Activated CD8-positive, alpha-beta T cell treated with anti-CD3 and anti-CD28 coated beads, Interleukin-2, amount 10 ng/mL, durations not matched to agents 7 days and 5 days (primary cell): ENCODE measurements at regions of chr20 and their contacts with region 1.

Region 1: GRCh38 chr20:34768096-34768495 is 57.4 kb downstream of the NCOA6 start:
- DNase-seq: no peak
- ATAC-seq: no peak
- H3K4me3 Mint-ChIP-seq: no peak overlapping the region
- H3K27ac Mint-ChIP-seq: no peak overlapping the region
- H3K4me1 Mint-ChIP-seq: no peaks in the 10 kb centered on the region
- H3K27me3 Mint-ChIP-seq: no peaks in the 10 kb centered on the region

Region 2: DNA sequence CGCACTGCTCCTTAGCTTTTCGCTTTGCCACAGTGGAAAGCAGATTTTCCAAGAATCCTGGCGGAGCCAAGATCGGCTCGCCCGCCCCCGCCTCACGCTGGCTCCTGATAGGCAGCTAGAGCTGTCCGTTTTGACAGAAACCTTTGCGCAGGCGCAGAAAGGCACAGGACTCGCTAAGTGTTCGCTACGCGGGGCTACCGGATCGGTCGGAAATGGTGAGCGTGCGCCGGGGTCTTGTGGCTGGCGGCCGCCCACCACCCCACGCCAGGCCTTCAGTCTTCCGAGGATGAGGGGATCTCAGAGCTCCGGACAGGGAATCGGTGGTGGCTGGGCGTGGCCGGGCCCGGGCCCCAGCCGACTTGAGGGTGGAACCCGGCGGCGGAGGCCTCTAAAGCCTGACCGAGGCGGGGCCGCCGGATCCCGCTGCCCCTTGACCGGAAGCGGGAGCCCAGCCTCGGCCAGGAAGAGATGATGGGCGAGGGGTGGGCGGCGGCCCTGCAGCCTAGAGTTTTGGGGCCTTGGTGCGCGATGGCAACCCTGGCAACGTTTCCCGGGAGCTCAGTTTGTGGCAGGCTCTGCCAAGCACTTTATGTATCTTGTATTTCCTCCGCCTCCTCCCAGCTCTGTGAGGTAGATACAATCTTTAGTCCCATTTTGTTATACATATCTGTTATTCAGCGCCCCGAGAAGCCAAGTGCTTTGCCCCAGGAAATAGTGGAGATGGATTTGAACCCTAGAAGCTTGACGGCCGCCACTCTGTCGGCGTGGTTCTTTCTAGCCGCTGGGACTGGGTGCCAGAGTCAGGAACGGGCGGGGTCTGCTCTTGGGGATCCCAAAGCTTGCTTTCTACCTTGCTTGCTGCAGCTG is 251.6 kb before region 1 on chr20 and contains the start of gene DYNLRB1:
- CTCF ChIA-PET with region 1: interaction called, 12 read pairs
- POLR2A ChIA-PET with region 1: no interaction called
- DNase-seq: peak; percentile 97
- ATAC-seq: peak; percentile 88
- H3K4me3 Mint-ChIP-seq: peak within 1 kb of the TSS; percentile 98
- H3K27ac Mint-ChIP-seq: peak within 1 kb of the TSS; percentile 98
- H3K4me1 Mint-ChIP-seq: peaks cover 31% of the 10 kb centered on the region
- H3K27me3 Mint-ChIP-seq: no peaks in the 10 kb centered on the region
- total RNA-seq, gene DYNLRB1: 91.9 to 103 TPM

Region 3: DNA sequence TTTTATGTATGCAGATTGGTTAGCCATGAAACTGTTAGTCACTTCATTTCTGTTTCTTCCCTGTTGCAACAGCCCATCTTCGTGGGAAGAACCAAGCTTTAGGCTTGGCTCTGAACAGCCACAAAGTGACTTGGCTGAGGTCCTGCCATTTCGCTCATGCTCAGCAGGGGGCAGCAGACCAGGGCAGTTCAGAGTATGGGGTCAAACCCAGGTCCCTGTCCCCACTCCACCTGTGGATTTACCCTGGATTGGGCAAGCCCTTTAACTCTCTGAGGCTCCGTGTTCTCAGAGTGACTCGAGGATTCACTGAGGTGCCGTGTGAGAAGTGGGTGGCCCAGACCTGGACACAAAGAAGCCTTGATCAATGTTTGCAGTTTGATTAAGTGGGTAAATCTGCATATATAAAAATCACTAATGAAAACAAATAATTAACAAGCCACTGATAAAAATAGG is 229.4 kb before region 1 on chr20:
- CTCF ChIA-PET with region 1: interaction called, 12 read pairs
- POLR2A ChIA-PET with region 1: no interaction called
- DNase-seq: peak; percentile 66
- ATAC-seq: peak; percentile 66
- H3K4me3 Mint-ChIP-seq: no peak overlapping the region
- H3K27ac Mint-ChIP-seq: no peak overlapping the region
- H3K4me1 Mint-ChIP-seq: peaks cover 2% of the 10 kb centered on the region
- H3K27me3 Mint-ChIP-seq: no peaks in the 10 kb centered on the region

Region 4: GRCh38 chr20:34544109-34544793 is 223.8 kb before region 1 on chr20:
- CTCF ChIA-PET with region 1: interaction called, 12 read pairs
- POLR2A ChIA-PET with region 1: no interaction called
- DNase-seq: peak; percentile 40
- ATAC-seq: peak; percentile 83
- H3K4me3 Mint-ChIP-seq: no peak overlapping the region
- H3K27ac Mint-ChIP-seq: no peak overlapping the region
- H3K4me1 Mint-ChIP-seq: peaks cover 9% of the 10 kb centered on the region
- H3K27me3 Mint-ChIP-seq: no peaks in the 10 kb centered on the region

Region 5: DNA sequence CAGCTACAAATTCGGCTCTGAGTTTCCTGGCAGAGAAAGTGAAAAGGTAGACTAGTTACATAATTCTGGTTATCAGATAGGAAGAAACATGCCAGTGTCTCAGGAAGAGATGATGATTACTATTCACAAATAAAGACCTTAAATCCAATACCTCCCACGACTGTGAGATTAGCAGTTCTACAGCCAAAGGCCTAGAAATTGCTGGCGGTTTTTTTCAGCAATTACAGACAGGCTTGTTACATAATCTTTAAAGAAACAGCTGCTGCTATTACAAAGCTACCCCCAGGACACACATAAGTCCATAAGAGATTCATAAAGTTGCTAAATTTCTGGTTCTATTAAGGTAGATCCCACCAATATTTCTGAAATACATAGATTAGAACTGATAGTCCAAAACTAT is 131.4 kb before region 1 on chr20:
- CTCF ChIA-PET with region 1: no interaction called
- POLR2A ChIA-PET with region 1: no interaction called
- DNase-seq: no peak
- ATAC-seq: no peak
- H3K4me3 Mint-ChIP-seq: no peak overlapping the region
- H3K27ac Mint-ChIP-seq: no peak overlapping the region
- H3K4me1 Mint-ChIP-seq: no peaks in the 10 kb centered on the region
- H3K27me3 Mint-ChIP-seq: no peaks in the 10 kb centered on the region

Region 6: DNA sequence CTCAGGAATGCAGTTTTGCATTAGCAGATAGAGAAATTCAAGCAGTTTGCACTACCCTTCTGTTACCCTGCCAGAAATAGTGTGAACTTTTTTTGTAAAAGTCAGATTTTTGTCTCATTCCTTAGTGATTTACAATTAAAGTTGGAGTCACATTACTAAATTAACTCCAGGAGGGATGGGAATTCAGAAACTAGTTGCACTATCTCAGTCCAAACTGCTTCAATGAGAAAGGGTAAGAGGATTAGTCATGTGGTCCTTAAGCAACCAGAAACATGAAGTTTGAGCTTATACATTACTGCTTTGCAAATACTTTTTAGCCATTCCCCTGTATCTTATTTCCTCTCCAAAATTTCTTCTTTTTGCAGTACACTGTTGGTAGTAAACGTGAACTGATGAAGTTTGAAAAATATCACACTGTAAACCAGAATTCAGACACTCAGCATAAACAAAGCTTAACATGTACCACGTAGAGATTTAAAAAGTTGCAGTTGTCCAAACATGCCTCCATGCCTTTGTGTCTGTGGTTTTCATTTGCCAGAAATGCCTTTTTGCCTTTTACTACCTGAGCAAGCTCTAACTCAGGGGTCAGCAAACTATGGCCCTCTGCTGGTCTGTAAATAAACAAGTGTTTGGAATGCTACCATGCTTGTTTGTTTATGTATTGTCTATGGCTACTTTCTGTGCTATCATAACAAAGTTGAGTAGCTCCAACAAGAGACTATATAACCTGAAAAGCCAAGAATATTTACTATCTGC is 14.2 kb before region 1 on chr20:
- CTCF ChIA-PET with region 1: interaction called, 31 read pairs
- POLR2A ChIA-PET with region 1: interaction called, 4 read pairs
- DNase-seq: no peak
- ATAC-seq: no peak
- H3K4me3 Mint-ChIP-seq: no peak overlapping the region
- H3K27ac Mint-ChIP-seq: no peak overlapping the region
- H3K4me1 Mint-ChIP-seq: no peaks in the 10 kb centered on the region
- H3K27me3 Mint-ChIP-seq: no peaks in the 10 kb centered on the region

Region 7: GRCh38 chr20:34781220-34781619 is 13.1 kb after region 1 on chr20:
- CTCF ChIA-PET with region 1: interaction called, 27 read pairs
- POLR2A ChIA-PET with region 1: no interaction called
- DNase-seq: no peak
- ATAC-seq: no peak
- H3K4me3 Mint-ChIP-seq: no peak overlapping the region
- H3K27ac Mint-ChIP-seq: no peak overlapping the region
- H3K4me1 Mint-ChIP-seq: peaks cover 4% of the 10 kb centered on the region
- H3K27me3 Mint-ChIP-seq: no peaks in the 10 kb centered on the region